BJ (cell line): ENCODE measurements at regions of chr9 and their contacts with region 1.

Region 1: GRCh38 chr9:123948286-123948685 is 18.4 kb upstream of the DENND1A start:
- DNase-seq: no peak
- H3K4me3 ChIP-seq: no peak overlapping the region
- H3K27me3 ChIP-seq: peaks cover 6% of the 10 kb centered on the region
- CTCF ChIP-seq: no peak

Region 2: GRCh38 chr9:123696476-123696875 is 251.8 kb before region 1 on chr9:
- CTCF ChIA-PET with region 1: no interaction called
- POLR2A ChIA-PET with region 1: interaction called, 10 read pairs
- DNase-seq: no peak
- H3K4me3 ChIP-seq: no peak overlapping the region
- H3K27me3 ChIP-seq: no peaks in the 10 kb centered on the region
- CTCF ChIP-seq: no peak

Region 3: DNA sequence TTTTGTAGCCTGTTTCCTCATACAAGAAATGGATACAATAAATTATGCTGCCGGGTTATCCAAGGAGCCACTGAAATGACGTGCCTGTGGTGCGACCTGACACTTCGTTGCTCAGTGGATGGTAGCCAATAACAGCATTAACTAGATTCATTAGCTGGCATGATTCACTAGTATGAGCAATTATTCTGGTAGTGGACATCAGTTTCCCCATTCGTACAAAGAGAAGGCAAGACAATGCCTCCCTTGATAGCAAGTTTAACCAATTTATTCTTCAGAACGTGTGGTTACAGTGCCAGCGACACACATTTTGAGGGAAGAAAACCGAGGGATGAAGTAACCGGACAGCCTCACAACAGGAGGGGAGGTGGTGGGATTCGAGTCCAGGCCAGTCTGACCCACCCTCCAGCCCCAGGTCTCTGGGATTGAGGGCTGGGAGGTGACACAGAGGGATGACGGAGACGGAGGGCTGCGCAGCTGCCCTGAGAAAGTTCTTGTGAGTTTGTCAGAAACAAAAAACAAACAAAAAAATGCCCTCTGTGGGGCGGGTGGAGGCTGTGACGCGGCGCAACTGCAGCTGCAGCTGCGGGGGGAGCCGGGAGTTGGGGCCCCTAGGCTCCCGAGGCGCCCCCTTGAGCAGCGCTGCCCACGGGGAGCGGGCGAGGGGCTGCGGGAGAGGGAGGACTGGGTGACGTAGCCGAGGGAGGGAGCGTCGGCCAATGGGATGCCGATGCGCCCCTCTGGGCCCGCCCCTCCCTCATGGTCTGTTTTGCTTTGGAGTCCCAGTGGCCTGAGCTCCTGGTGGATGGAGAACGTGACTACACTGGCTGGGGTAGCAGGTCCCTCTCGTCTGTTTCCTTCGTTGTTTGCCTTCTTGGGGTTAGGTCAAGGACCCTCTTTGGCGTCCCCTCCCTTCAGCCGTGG is 74.2 kb after region 1 on chr9:
- CTCF ChIA-PET with region 1: no interaction called
- POLR2A ChIA-PET with region 1: no interaction called
- DNase-seq: no peak
- H3K4me3 ChIP-seq: no peak overlapping the region
- H3K27me3 ChIP-seq: peaks cover 51% of the 10 kb centered on the region
- CTCF ChIP-seq: no peak